Activated naive CD4-positive, alpha-beta T cell treated with anti-CD3 and anti-CD28 coated beads for 36 hours (primary cell): ENCODE measurements at regions of chr10 and their contacts with region 1.

Region 1: GRCh38 chr10:72162978-72163377 is 52.8 kb upstream of the ANAPC16 start:
- DNase-seq: peak; percentile 49
- H3K4me3 Mint-ChIP-seq: no peak overlapping the region
- H3K27ac Mint-ChIP-seq: peak overlapping the region; percentile 54
- H3K4me1 Mint-ChIP-seq: peaks cover 34% of the 10 kb centered on the region
- H3K27me3 Mint-ChIP-seq: no peaks in the 10 kb centered on the region

Region 2: DNA sequence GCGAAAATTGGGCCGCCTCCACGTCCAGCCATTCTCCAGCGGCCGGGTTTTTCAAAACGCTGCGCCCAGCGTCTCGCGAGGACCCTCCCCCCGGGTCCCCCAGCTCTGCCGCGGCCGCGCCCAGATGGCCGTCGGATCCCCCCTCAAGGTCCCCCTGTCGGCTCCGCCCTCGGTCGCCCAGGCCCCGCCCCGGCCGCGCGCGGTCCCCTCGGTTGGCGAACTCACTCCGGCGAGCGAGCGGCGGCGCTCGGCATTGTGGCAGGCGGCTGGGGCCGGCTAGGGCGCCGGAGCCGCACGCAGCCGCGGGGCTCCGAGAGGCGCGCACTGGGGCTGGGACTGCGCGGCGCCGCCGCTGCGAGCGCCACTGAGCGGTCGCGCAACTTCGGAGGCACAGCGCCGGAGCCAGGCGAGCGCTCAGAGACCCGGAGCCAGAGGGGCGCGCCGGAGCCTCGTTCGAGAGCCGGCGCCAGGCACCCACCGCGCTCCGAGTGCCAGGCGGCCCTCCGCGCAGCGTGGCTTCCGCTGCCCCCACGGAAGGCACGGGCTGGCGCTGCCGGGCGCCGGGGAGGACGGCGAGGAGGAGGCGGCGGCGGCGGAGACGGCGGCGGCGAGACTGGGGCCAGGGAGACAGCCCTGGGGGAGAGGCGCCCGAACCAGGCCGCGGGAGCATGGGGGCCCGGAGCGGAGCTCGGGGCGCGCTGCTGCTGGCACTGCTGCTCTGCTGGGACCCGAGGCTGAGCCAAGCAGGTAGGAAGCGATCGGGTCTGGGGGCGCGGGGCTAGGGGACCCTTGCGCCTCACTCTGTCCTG is 950.5 kb before region 1 on chr10 and contains the start of gene UNC5B:
- CTCF ChIA-PET with region 1: no interaction called
- intact Hi-C with region 1: no loop called
- DNase-seq: peak; percentile 45
- H3K4me3 Mint-ChIP-seq: peak within 1 kb of the TSS; percentile 46
- H3K27ac Mint-ChIP-seq: no peak within 1 kb of the TSS
- H3K4me1 Mint-ChIP-seq: peaks cover 10% of the 10 kb centered on the region
- H3K27me3 Mint-ChIP-seq: peaks cover 60% of the 10 kb centered on the region
- total RNA-seq, gene UNC5B: 0.05 TPM

Region 3: GRCh38 chr10:72088889-72089575 is 73.9 kb before region 1 on chr10:
- CTCF ChIA-PET with region 1: no interaction called
- intact Hi-C with region 1: loop called (anchors 1 kb)
- DNase-seq: peak; percentile 81
- H3K4me3 Mint-ChIP-seq: peak overlapping the region; percentile 99
- H3K27ac Mint-ChIP-seq: peak overlapping the region; percentile 99
- H3K4me1 Mint-ChIP-seq: peaks cover 63% of the 10 kb centered on the region
- H3K27me3 Mint-ChIP-seq: no peaks in the 10 kb centered on the region

Region 4: GRCh38 chr10:72107325-72108003 is 55.5 kb before region 1 on chr10:
- CTCF ChIA-PET with region 1: no interaction called
- intact Hi-C with region 1: loop called (anchors 2 kb)
- DNase-seq: peak; percentile 48
- H3K4me3 Mint-ChIP-seq: peak overlapping the region; percentile 71
- H3K27ac Mint-ChIP-seq: peak overlapping the region; percentile 96
- H3K4me1 Mint-ChIP-seq: peaks cover 85% of the 10 kb centered on the region
- H3K27me3 Mint-ChIP-seq: no peaks in the 10 kb centered on the region

Region 5: DNA sequence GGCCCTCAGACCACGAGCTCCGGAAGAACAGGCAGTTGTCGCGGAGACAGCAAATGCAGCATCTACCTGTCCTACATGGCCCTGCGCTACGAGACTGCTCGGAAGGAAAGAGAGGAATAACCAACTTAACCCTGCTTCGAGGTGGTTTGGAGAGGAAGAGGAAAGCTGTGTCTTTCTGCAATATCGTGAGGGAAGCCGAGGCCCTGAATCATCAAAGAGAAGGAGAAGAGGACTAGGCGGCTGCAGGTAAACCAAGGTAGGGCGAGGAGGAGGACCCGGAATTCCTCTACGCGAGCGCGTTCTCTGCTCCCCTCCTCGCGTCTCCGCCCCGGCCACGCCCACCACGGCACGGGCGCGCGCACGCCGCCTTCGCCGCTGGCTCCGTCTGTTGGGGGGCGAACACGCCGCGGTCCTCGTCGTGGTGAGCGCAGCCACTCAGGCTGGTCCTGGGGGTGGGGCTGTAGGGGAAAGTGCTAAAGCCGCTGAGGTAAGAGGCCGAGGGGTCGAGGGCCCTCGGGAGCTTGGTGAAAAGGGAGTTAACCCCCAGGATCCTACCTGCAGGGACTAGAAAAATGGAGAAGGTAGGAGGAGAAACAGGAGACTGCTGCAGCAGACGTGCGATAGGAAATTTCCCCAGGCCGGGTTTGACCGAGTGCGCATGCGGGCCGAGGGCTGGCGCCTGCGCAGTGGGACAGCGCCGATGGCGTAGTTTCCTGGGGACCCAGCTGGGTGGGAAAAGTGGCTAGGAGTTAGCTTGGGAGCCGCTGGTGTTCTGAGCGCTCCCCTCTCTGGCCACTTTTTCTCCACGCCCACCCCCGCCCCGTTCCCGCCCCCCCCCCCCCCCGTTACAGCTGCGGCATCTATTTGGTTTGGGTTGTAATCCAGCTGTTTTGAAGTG is 52.9 kb after region 1 on chr10 and contains the starts of genes ANAPC16 and ASCC1:
- CTCF ChIA-PET with region 1: no interaction called
- intact Hi-C with region 1: loop called (anchors 1 kb)
- DNase-seq: peak; percentile 93
- H3K4me3 Mint-ChIP-seq: peak within 1 kb of the TSS; percentile 91
- H3K27ac Mint-ChIP-seq: peak within 1 kb of the TSS; percentile 98
- H3K4me1 Mint-ChIP-seq: peaks cover 67% of the 10 kb centered on the region
- H3K27me3 Mint-ChIP-seq: no peaks in the 10 kb centered on the region
- total RNA-seq, gene ANAPC16: 127 to 128 TPM
- total RNA-seq, gene ASCC1: 61.6 to 68.5 TPM

Region 6: GRCh38 chr10:72297968-72298773 is 135.2 kb after region 1 on chr10:
- CTCF ChIA-PET with region 1: no interaction called
- intact Hi-C with region 1: loop called (anchors 2 kb)
- DNase-seq: peak; percentile 98
- H3K4me3 Mint-ChIP-seq: peak overlapping the region; percentile 89
- H3K27ac Mint-ChIP-seq: peak overlapping the region; percentile 100
- H3K4me1 Mint-ChIP-seq: peaks cover 62% of the 10 kb centered on the region
- H3K27me3 Mint-ChIP-seq: no peaks in the 10 kb centered on the region